Heart right ventricle (tissue), 16 donors: ENCODE measurements at regions of chr7 and their contacts with region 1.

Region 1: GRCh38 chr7:76133164-76133775 is 68.4 kb upstream of the SRRM3 start:
- DNase-seq: no peak
- ATAC-seq: no peak
- H3K4me3 ChIP-seq: no peak overlapping the region
- H3K27ac ChIP-seq: no peak overlapping the region
- H3K4me1 ChIP-seq: peaks cover 0 to 3% (median 0%) of the 10 kb centered on the region in 9 donors
- H3K27me3 ChIP-seq: peaks cover 0 to 16% (median 0%) of the 10 kb centered on the region in 7 donors
- CTCF ChIP-seq: no peak

Region 2: GRCh38 chr7:76047811-76048667 is 85.2 kb before region 1 on chr7 and contains the starts of genes MDH2 and STYXL1:
- intact Hi-C with region 1: loop called in 2 of 10 experiments (anchors 2 to 10 kb)
- DNase-seq: peak; percentile 94 to 95
- ATAC-seq: peak; percentile 96 to 98 (median 98)
- H3K4me3 ChIP-seq: peak within 1 kb of the TSS; percentile 74 to 97 (median 91)
- H3K27ac ChIP-seq: peak within 1 kb of the TSS; percentile 80 to 97 (median 96)
- H3K4me1 ChIP-seq: peaks cover 2 to 60% (median 31%) of the 10 kb centered on the region in 9 donors
- H3K27me3 ChIP-seq: no peaks in the 10 kb centered on the region
- CTCF ChIP-seq: no peak
- total RNA-seq, gene MDH2: 383 to 686 (median 453) TPM
- total RNA-seq, gene STYXL1: 11.0 to 30.0 (median 16.9) TPM

Region 3: GRCh38 chr7:76054128-76055120 is 78.8 kb before region 1 on chr7:
- intact Hi-C with region 1: loop called in 3 of 10 experiments (anchors 2 to 10 kb)
- DNase-seq: no peak
- ATAC-seq: peak in 3 of 8 donors; percentile 28 to 61 (median 28)
- H3K4me3 ChIP-seq: no peak overlapping the region
- H3K27ac ChIP-seq: peak overlapping the region in 2 of 10 donors; percentile 21 to 53
- H3K4me1 ChIP-seq: peaks cover 2 to 70% (median 34%) of the 10 kb centered on the region in 9 donors
- H3K27me3 ChIP-seq: no peaks in the 10 kb centered on the region
- CTCF ChIP-seq: no peak